ENCODE measurements at regions of chr12 and their contacts with region 1.

Region 1: DNA sequence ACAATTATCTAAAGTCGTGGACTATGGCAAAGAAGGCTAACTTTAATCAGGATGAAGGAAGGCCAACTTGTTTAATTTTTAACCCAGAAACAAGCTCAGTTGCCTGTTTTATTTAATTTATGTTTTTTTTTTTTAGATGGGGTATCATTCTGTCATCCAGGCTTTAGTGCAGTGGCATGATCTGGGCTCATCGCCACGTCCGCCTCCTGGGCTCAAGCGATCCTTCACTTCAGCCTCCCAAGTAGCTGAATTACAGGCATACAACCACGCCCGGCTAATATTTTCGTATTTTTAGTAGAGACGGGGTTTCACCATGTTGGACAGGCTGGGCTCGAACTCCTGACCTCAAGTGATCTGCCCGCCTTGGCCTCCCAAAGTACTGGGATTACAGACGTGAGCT is 19.7 kb downstream of the NUDT4 start:
- DNase-seq: no peak
- ATAC-seq: no peak
- H3K4me3 ChIP-seq: no peak overlapping the region
- H3K4me3 Mint-ChIP-seq: no peak overlapping the region
- H3K27ac ChIP-seq: no peak overlapping the region
- H3K27ac Mint-ChIP-seq: no peak overlapping the region
- H3K4me1 ChIP-seq: no peaks in the 10 kb centered on the region
- H3K4me1 Mint-ChIP-seq: peaks cover 0 to 4% (median 4%) of the 10 kb centered on the region in 3 donors
- H3K27me3 ChIP-seq: no peaks in the 10 kb centered on the region
- H3K27me3 Mint-ChIP-seq: no peaks in the 10 kb centered on the region

Region 2: GRCh38 chr12:92987362-92987761 is 410.1 kb before region 1 on chr12:
- CTCF ChIA-PET with region 1: interaction called, 18 to 26 read pairs
- POLR2A ChIA-PET with region 1: no interaction called
- DNase-seq: peak in 3 of 35 experiments; percentile 15 to 70 (median 24)
- ATAC-seq: peak; percentile 56 to 78 (median 67)
- H3K4me3 ChIP-seq: no peak overlapping the region
- H3K4me3 Mint-ChIP-seq: peak overlapping the region in 1 of 3 donors; percentile 49
- H3K27ac ChIP-seq: no peak overlapping the region
- H3K27ac Mint-ChIP-seq: peak overlapping the region in 1 of 2 donors; percentile 25
- H3K4me1 ChIP-seq: peaks cover 6 to 9% of the 10 kb centered on the region in 2 experiments
- H3K4me1 Mint-ChIP-seq: peaks cover 10 to 13% (median 10%) of the 10 kb centered on the region in 3 donors
- H3K27me3 ChIP-seq: no peaks in the 10 kb centered on the region
- H3K27me3 Mint-ChIP-seq: no peaks in the 10 kb centered on the region

Region 3: DNA sequence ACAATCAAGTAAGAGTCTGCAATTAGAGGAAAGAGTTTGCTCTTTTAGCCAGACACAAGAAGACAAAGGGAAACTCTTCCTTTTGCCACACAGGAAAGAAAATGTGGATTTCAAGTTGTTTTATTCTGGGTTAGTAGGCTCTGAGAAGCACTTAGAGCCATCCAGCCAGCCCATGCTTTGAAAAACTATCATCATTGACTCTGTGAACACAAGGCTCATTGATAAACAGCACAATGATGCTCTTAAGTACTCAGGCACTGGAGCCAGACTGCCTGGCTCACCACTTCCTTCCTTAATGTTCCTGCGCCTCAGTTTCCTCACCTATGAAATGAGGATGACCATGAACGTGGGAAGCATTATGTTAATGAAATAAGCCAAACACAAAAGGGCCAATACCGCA is 318.1 kb before region 1 on chr12:
- CTCF ChIA-PET with region 1: no interaction called
- POLR2A ChIA-PET with region 1: no interaction called
- DNase-seq: no peak
- ATAC-seq: no peak
- H3K4me3 ChIP-seq: no peak overlapping the region
- H3K4me3 Mint-ChIP-seq: no peak overlapping the region
- H3K27ac ChIP-seq: no peak overlapping the region
- H3K27ac Mint-ChIP-seq: no peak overlapping the region
- H3K4me1 ChIP-seq: no peaks in the 10 kb centered on the region
- H3K4me1 Mint-ChIP-seq: no peaks in the 10 kb centered on the region
- H3K27me3 ChIP-seq: peaks cover 0 to 3% of the 10 kb centered on the region in 2 experiments
- H3K27me3 Mint-ChIP-seq: no peaks in the 10 kb centered on the region

Region 4: DNA sequence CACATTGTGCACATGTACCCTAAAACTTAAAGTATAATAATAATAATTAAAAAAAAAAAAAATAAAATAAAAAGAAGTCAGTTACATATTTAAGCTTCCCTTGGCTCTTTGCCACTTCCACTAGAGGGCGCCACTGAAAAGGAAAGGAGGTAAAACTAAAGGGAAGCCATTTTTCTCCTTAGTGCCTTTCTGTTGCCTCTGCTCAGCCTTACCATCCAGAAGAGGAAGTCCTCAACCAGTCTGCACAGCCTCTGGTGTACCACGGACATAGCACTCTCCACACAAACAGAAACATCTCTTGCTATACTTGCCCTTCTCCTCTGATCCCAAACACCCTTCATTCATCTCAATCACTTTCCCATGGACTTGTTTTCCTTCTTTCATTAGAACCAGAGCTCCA is 299.3 kb before region 1 on chr12:
- CTCF ChIA-PET with region 1: interaction called, 3 to 15 read pairs
- POLR2A ChIA-PET with region 1: no interaction called
- DNase-seq: peak; percentile 26 to 82 (median 60)
- ATAC-seq: peak; percentile 45 to 83 (median 48)
- H3K4me3 ChIP-seq: no peak overlapping the region
- H3K4me3 Mint-ChIP-seq: no peak overlapping the region
- H3K27ac ChIP-seq: no peak overlapping the region
- H3K27ac Mint-ChIP-seq: no peak overlapping the region
- H3K4me1 ChIP-seq: peaks cover 0 to 4% of the 10 kb centered on the region in 2 experiments
- H3K4me1 Mint-ChIP-seq: peaks cover 6 to 7% (median 7%) of the 10 kb centered on the region in 3 donors
- H3K27me3 ChIP-seq: no peaks in the 10 kb centered on the region
- H3K27me3 Mint-ChIP-seq: no peaks in the 10 kb centered on the region